Endothelial cell of umbilical vein (primary cell): ENCODE measurements at regions of chr9 and their contacts with region 1.

Region 1: GRCh38 chr9:135971892-135972291 is 10.7 kb upstream of the UBAC1 start:
- DNase-seq: no peak
- H3K4me3 ChIP-seq: no peak overlapping the region
- H3K27ac ChIP-seq: no peak overlapping the region
- H3K4me1 ChIP-seq: peaks cover 22% of the 10 kb centered on the region
- H3K27me3 ChIP-seq: no peaks in the 10 kb centered on the region
- CTCF ChIP-seq: no peak
- POLR2A ChIP-seq: no peak

Region 2: DNA sequence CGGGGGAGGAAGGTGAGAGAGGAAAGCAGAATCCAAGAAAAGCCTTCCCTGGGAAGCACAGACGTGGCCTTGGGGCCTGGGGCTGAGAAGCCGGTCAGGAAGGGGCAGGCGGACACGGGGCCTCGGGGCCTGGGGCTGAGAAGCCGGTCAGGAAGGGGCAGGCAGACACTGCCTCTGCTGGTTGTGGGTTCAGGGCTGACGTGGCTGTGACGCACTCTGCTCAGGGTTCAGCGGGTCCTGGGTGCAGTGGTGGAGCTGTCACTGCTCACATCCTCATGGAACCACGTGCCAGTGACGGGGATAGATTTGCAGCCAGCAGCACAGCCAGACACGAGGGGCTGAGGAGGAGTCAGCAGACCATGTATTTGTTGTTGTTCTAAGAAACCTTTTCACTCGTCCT is 397.6 kb before region 1 on chr9:
- CTCF ChIA-PET with region 1: no interaction called
- POLR2A ChIA-PET with region 1: no interaction called
- dilution Hi-C with region 1: no loop called
- intact Hi-C with region 1: no loop called
- DNase-seq: no peak
- H3K4me3 ChIP-seq: no peak overlapping the region
- H3K27ac ChIP-seq: no peak overlapping the region
- H3K4me1 ChIP-seq: no peaks in the 10 kb centered on the region
- H3K27me3 ChIP-seq: no peaks in the 10 kb centered on the region
- CTCF ChIP-seq: no peak
- POLR2A ChIP-seq: no peak

Region 3: DNA sequence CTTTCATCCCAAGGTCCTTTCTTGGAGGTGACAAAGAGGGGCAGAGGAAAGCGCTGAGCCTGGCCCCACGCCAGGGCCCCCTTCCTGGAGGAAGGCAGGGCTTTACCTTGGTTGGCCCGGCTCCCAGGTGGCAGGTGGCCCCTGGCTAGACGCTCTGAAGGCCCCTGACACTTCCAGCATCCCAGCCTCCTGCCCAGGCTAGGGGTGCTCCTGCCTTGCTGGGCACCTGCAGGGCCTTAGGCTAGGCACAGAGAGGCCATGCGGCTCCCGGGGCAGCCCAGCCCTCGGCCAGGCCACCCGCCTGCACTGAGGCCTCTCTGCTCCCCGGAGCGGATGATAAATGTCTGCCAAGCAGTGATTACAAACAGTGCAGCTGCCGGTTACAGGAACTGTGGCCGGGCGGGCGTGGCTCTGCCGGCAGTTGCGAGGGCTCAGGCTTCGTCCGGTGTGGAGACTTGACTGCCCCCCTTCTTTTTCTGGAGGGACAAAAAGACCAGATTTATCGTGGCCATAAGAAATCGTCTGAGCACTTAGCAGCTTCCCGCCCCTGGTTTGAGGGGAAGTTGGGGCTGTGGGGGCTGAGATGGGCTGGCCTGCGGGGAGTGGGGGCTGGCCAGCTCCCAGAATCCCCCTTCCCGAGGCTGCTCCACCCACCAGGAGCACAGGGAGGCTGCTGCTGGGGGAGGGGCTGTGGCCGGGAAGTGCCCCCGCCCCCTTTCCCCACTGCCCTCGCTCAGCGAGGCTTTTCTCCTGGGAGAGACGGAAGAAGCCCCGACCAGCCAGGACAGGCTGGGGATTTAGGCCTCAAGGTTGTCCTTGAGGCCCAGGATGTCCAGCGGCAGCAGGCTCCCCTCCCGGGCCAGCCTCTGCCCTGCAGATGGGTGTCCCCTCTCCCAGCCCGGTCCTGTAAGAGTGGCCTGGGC is 20.9 kb after region 1 on chr9:
- CTCF ChIA-PET with region 1: interaction called, 10 read pairs
- POLR2A ChIA-PET with region 1: no interaction called
- dilution Hi-C with region 1: no loop called
- intact Hi-C with region 1: loop called (anchors 2 kb)
- DNase-seq: peak; percentile 81
- H3K4me3 ChIP-seq: no peak overlapping the region
- H3K27ac ChIP-seq: peak overlapping the region; percentile 86
- H3K4me1 ChIP-seq: peaks cover 22% of the 10 kb centered on the region
- H3K27me3 ChIP-seq: no peaks in the 10 kb centered on the region
- CTCF ChIP-seq: no peak
- POLR2A ChIP-seq: peak; percentile 69

Region 4: DNA sequence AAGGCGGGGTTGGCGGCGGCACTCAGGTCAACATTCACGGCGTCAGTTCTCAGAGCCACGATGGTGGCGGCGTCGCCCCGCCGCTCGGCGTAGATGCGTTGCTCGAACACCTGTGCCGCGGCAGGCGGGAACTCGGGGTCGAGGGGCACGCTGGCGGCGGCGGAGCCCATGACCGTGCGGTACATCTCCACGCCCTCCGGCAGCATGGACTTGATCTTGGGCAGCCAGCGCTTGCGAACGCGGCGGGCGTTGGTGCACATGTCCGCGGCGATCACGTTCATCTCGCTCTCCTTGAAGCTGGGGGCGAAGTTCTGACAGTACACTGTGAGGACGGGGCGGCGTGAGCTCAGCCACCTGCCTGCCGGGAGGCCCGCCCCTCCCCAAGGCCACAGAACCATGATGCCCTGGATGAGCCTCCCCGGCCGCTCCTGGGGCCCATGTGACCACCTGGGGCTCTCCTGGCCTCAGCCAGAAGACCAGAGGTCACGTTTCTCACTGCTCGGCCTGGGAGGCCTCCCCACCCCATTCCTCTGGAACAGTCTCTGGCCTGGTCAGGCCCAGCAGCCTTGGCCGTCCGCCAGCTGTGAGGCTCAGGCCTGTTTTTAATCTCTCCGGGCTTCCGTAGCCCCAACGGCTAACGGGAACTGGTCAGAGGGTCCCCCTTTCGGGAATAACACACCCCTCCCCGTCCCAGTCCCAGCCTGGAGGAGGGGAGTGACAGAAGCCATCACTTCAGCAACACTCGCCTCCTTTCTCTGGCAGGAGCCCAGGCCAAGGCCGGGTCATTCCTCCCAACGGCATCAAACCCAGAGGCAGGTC is 40.0 kb after region 1 on chr9:
- CTCF ChIA-PET with region 1: interaction called, 12 read pairs
- POLR2A ChIA-PET with region 1: no interaction called
- dilution Hi-C with region 1: no loop called
- intact Hi-C with region 1: loop called (anchors 1 kb)
- DNase-seq: peak; percentile 70
- H3K4me3 ChIP-seq: no peak overlapping the region
- H3K27ac ChIP-seq: peak overlapping the region; percentile 76
- H3K4me1 ChIP-seq: peaks cover 54% of the 10 kb centered on the region
- H3K27me3 ChIP-seq: no peaks in the 10 kb centered on the region
- CTCF ChIP-seq: no peak
- POLR2A ChIP-seq: no peak

Region 5: DNA sequence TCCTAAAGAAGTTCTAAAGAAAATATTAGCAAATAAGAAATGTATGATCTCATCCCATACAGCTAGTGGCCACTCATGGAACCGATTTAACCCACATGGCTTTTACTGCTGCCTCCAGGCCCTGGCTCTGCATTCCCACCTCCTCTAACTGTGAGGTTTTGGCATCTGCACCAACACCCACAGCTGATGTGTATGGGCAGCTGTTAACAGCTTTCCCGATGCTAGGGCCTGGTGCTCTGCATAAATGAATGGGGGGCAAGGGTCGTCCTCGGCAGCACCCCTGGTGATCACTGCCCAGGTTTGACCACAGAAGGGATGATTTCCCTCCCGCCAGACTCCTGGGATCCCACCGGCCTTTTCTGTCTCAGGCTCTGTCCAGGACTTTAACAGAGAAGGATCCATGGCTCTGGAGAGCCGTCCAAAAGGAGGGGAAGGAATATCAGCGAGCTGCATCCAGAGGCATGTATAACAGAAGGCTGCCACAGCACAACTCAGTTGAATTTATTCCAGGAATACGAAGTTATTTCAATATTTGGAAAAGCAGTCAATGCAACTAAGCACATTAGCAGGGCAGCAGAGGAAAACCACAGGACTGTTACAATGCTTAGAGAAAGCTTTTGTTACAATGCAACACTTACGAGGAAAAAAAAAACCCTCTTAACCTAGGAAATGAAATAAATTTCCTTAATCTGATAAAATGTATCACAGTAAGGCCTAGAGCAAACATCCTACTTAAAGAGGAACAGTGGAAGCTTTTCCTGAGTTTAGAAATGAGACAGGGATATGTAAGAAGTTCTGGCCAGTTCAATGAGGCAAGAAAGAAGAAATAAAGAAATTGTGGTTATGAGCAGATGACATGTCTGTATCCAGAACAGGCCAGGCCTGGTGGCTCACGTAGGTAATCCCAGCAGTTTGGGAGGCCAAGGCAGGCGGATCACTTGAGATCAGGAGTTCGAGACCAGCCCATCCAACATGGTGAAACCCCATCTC is 60.1 kb after region 1 on chr9:
- CTCF ChIA-PET with region 1: interaction called, 15 read pairs
- POLR2A ChIA-PET with region 1: no interaction called
- dilution Hi-C with region 1: no loop called
- intact Hi-C with region 1: no loop called
- DNase-seq: no peak
- H3K4me3 ChIP-seq: no peak overlapping the region
- H3K27ac ChIP-seq: no peak overlapping the region
- H3K4me1 ChIP-seq: peaks cover 20% of the 10 kb centered on the region
- H3K27me3 ChIP-seq: no peaks in the 10 kb centered on the region
- CTCF ChIP-seq: no peak
- POLR2A ChIP-seq: no peak

Region 6: DNA sequence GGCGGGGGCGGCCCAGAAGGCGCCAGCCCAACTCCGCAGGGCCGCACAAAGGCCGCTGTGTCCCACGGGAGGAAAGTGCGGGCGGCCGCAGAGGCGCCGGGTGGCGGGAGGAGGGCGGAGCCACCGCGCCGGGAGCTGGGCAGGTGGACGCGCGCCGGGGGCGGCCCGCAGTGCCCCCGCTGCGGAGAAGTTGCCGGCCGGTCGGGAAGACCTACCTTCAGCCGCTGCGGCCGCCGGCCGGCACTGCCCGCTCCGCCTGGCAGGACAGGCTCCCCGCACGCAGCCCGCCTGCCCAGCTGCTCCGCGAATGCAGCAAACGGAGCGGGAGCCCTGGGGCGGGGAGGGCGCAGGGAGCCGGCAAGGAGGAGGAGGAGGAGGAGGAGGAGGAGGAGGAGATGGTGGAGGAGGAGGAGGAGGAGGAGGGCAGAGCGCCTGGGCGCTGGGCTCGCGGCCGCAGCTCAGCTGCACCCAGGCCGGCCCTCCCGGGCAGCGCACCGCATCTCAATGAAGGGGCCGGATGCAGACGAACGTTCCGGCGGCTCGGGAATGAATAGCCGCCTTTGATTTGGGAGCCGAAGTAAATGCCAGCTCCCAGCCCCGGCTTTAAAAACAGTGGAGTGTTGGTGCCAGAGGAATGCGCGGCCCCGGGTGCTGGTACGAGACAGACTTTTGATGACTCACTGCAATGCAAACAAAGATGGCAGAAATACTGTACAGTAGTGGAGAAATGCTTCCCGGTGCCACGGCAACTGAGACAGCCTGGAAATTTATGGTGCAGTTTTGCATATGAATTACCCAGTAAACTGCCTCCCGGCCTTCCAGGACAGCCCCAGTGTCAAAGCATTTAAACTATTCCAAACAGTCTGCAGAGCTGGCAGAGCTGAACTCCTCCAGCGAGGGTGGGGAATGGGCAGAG is 79.9 kb after region 1 on chr9:
- CTCF ChIA-PET with region 1: interaction called, 31 read pairs
- POLR2A ChIA-PET with region 1: no interaction called
- dilution Hi-C with region 1: no loop called
- intact Hi-C with region 1: loop called (anchors 1 kb)
- DNase-seq: peak; percentile 96
- H3K4me3 ChIP-seq: peak overlapping the region; percentile 49 to 66 (median 53)
- H3K27ac ChIP-seq: peak overlapping the region; percentile 66
- H3K4me1 ChIP-seq: peaks cover 33% of the 10 kb centered on the region
- H3K27me3 ChIP-seq: no peaks in the 10 kb centered on the region
- CTCF ChIP-seq: no peak
- POLR2A ChIP-seq: peak; percentile 47

Region 7: DNA sequence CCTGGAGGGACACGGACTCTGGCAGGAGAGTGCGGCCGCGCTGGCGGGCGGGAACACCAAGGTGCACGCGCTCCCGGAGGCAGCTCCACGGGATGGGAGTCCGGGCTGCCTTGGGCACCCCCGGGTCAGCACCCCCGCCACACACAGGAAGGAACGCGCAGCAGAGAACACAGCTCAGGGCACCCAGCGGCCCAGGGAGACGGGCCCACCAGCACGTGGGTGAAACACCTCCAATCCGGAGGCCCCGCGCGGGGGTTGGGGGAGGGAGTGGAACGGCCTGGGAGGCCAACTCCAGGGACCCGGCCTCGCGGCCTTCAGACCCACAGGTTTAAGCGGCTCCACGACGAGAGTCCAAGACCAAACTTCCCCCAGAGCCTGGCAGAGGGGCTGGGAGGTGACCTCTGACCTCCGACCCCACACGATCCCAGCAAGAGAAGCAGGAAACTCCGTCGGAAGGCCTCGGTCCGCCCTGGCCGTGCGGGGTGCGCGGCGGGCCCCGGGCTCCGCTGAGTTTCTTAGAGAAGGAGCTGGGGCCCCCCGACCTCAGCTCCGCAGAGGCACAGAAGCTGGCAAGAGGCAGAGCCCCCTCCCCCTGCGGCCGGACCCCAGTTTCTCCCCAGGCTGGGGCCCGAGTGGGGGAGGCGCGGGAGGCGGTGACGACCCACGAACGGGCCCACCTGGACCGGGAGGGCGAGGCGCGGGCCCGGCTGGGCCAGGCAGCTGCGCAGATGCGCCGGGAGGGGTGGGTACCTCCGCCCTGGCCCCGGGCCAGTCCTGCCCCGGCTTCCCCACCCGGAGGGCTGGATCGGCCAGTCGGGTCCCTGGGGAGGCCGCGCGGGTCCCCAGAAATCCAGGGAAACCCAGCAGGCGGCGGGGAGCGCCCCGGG is 122.3 kb after region 1 on chr9:
- CTCF ChIA-PET with region 1: interaction called, 44 read pairs
- POLR2A ChIA-PET with region 1: no interaction called
- dilution Hi-C with region 1: no loop called
- intact Hi-C with region 1: loop called (anchors 1 kb)
- DNase-seq: peak; percentile 33
- H3K4me3 ChIP-seq: peak overlapping the region; percentile 58 to 86 (median 68)
- H3K27ac ChIP-seq: peak overlapping the region; percentile 64
- H3K4me1 ChIP-seq: peaks cover 19% of the 10 kb centered on the region
- H3K27me3 ChIP-seq: no peaks in the 10 kb centered on the region
- CTCF ChIP-seq: no peak
- POLR2A ChIP-seq: peak; percentile 17

Region 8: DNA sequence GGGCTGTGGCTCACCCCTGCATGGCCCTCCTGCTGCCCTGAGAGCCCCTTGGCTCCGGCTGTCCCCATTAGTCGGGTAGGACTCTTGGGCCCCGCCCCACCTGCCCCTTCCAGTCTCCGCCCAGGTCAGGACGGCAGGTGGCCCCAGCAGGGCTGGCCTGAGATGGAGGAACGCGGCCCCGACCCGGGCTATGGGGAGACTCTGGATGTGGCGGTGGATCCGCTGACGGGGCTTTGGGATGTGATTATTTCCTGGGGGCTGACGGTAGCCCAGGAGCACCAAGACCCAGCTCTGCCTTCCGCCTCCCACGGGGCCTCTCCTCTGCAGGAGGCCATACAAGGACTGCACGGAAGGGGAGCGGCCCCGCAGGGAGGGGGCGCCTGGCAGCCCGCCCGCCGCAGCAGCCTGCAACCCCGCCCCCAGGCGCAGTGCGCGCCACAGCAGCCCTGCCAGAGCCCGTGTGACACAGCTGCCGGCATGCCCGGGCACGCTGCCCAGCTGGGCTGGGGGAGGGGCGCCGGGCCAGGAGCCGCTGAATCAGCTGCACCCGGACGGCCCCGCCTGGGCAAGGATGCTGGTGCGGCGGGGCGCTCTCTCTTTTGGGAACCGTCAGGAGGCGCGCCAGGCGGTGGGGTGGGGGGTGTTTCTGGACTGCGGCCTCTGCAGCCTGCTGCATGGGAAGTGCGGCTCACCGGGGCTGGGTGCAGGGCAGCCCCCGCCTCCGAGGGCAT is 137.6 kb after region 1 on chr9:
- CTCF ChIA-PET with region 1: interaction called, 29 read pairs
- POLR2A ChIA-PET with region 1: no interaction called
- dilution Hi-C with region 1: no loop called
- intact Hi-C with region 1: no loop called
- DNase-seq: peak; percentile 87
- H3K4me3 ChIP-seq: peak overlapping the region in 1 of 3 experiments; percentile 9
- H3K27ac ChIP-seq: no peak overlapping the region
- H3K4me1 ChIP-seq: peaks cover 13% of the 10 kb centered on the region
- H3K27me3 ChIP-seq: no peaks in the 10 kb centered on the region
- CTCF ChIP-seq: no peak
- POLR2A ChIP-seq: peak; percentile 60